PC-9 (cell line): ENCODE measurements at regions of chr5 and their contacts with region 1.

Region 1: DNA sequence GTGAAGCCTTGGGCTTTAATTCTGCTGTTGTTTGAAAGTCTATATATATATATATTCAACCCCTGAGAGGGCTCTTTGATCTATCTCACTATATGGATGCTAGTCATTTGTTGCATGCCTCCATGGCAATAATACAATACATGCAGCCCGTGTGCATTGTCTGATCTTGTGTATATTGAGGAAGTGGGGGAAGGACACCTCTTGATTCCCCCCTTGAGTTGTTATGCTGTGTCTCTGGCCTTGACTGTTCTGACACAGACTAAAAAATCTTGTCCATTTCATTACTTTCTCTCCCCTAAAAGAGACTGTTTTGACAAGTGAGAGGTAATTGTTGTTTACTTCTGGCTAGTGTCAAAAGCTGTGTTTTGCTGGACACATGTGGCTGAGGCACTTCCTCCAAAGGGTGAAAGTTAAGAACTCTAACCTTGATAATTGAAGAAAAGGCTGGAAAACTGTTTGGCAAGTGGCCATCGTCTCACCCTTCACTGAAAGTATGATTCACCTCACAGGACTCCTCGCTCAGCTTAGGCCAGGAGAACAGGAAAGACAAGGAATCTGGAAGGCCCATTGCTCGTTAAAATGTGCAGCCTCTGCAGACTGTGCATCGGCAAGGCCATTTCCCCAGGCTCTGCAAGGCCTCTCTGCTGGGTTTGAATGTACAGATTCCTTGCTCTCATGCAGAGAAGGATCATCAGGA is 304.0 kb downstream of the PRELID2 start:
- DNase-seq: peak; percentile 88 to 93
- H3K4me3 ChIP-seq: no peak overlapping the region
- H3K27ac ChIP-seq: peak overlapping the region; percentile 71
- H3K4me1 ChIP-seq: peaks cover 25% of the 10 kb centered on the region
- H3K27me3 ChIP-seq: no peaks in the 10 kb centered on the region
- CTCF ChIP-seq: no peak

Region 2: GRCh38 chr5:145246961-145247744 is 284.0 kb before region 1 on chr5:
- CTCF ChIA-PET with region 1: no interaction called
- POLR2A ChIA-PET with region 1: no interaction called
- intact Hi-C with region 1: loop called (anchors 2 kb)
- DNase-seq: peak in 1 of 2 experiments; percentile 23
- H3K4me3 ChIP-seq: no peak overlapping the region
- H3K27ac ChIP-seq: no peak overlapping the region
- H3K4me1 ChIP-seq: peaks cover 27% of the 10 kb centered on the region
- H3K27me3 ChIP-seq: no peaks in the 10 kb centered on the region
- CTCF ChIP-seq: no peak

Region 3: DNA sequence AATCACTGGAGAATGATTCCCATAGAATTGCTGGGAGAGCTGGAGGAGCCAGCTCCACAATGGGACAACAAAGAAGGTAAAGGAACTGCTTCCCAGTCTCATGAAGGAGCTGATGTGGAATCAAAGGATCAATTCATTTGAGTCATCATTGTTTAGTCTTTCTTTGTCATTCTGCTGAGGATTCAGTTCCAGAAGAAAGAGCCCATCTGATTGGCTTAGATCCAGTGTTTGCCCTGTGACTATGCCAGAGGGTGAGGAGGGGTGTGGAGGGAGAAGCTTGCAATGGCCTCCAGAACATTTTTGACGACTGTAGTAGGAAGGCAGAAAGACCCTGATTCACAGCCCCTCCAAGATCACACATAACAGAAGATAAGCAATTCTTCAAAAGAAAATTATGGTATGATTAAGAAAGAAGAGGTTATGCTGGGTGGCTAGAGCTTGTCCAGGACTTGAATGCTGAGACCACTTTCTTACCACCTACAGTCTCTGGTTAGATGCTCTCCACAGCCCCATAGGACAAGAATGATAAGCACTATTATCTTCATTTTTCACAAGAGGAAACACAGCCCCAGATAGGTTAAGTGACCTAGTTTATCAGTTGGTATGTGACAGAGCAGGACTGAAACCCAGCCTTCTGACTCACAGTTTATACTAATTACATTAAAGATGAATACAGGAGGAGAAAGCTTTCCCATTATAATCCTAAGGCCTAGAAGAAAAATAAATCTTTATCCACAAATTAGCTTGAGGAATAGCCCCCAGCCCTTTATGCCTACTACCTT is 59.2 kb before region 1 on chr5:
- CTCF ChIA-PET with region 1: no interaction called
- POLR2A ChIA-PET with region 1: interaction called, 6 read pairs
- intact Hi-C with region 1: loop called (anchors 1 kb)
- DNase-seq: peak; percentile 31 to 67
- H3K4me3 ChIP-seq: no peak overlapping the region
- H3K27ac ChIP-seq: peak overlapping the region; percentile 44
- H3K4me1 ChIP-seq: peaks cover 19% of the 10 kb centered on the region
- H3K27me3 ChIP-seq: no peaks in the 10 kb centered on the region
- CTCF ChIP-seq: no peak

Region 4: DNA sequence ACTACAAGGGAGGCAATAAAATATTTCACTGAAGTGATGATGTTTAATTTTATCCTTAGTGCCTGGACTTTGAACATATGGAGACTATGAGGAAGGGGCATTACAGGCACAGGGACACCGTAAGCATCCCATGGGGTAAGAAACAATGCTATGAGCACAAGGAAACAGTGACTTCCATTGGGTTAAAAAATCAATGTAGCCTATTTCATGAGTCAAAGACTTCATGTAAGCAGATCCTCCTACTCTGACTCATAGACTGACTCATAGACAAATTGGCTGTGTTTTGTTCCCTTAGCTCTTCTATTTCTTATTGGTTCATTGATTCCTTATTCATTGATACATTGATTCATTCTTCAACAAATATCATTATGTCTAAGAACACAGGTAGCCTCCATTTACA is 47.0 kb before region 1 on chr5:
- CTCF ChIA-PET with region 1: no interaction called
- POLR2A ChIA-PET with region 1: no interaction called
- intact Hi-C with region 1: no loop called
- DNase-seq: peak in 1 of 2 experiments; percentile 58
- H3K4me3 ChIP-seq: no peak overlapping the region
- H3K27ac ChIP-seq: no peak overlapping the region
- H3K4me1 ChIP-seq: peaks cover 6% of the 10 kb centered on the region; the same call in 1 of the 2 replicates
- H3K27me3 ChIP-seq: no peaks in the 10 kb centered on the region
- CTCF ChIP-seq: no peak

Region 5: DNA sequence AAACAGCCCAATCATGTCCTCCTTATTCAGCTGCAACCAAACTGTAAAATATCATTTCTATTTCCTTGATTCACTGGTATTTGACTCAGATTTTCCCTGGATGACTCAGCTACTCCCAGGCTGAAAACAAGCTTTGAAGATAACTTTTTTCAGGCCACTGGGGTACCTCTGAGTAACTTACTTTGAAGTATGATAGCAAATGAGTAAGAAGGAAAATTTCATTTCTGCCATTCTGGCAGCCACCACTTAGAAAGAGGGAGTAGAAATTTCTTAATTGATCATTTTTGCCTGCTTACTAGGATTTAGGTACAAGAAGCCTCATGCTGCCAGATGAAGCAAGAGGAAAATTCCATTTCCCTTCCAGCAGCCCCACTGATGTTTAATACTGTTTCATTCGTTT is 56.5 kb after region 1 on chr5:
- CTCF ChIA-PET with region 1: no interaction called
- POLR2A ChIA-PET with region 1: no interaction called
- intact Hi-C with region 1: loop called (anchors 5 kb)
- DNase-seq: peak; percentile 29 to 73
- H3K4me3 ChIP-seq: no peak overlapping the region
- H3K27ac ChIP-seq: peak overlapping the region; percentile 45
- H3K4me1 ChIP-seq: peaks cover 16% of the 10 kb centered on the region
- H3K27me3 ChIP-seq: no peaks in the 10 kb centered on the region
- CTCF ChIP-seq: no peak